ENCODE measurements at regions of chr3 and their contacts with region 1.

Region 1: DNA sequence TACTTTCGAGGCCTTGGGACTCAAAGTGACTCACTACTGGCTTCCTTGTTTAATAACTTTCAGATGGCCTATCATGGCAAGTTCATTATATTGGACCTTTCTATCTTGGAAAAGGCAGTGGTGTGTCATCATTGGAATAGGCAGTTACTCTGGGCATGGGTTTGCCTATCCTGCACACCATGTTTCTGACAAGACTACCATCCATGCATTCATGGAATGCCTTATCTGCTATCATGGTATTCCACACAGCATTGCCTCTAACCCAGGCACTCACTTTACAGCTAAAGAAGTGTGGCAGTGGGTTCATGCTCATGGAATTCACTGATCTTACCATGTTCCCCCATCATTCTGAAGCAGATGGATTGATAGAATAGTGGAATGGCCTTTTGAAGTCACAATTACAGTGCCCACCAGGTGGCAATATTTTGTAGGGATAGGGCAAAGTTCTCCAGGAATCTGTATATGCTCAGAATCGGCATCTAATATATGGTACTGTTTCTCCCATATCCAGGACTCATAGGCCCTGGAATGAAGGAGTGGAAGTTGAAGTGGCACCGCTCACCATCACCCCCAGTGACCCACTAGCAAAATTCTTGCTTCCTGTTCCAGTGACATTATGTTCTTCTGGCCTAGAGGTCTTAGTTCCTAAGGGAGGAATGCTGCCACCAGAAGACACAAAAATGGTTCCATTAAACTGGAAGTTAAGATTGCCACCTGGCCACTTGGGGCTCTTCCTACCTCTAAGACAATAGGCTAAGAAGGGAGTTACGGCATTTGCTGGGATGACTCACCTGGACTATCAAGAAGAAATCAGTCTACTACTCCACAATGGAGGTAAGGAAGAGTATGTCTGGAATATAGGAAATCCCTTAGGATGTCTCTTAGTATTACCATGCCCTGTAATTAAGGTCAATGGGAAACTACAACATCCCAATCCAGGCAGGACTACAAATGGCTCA is 1161.4 kb downstream of the SI start:
- DNase-seq: peak; percentile 12 to 37 (median 14)
- ATAC-seq: no peak
- H3K4me3 ChIP-seq: no peak overlapping the region
- H3K27ac ChIP-seq: no peak overlapping the region
- H3K4me1 ChIP-seq: no peaks in the 10 kb centered on the region
- H3K27me3 ChIP-seq: no peaks in the 10 kb centered on the region
- CTCF ChIP-seq: peak in 6 of 7 experiments; percentile 7 to 59 (median 46)
- POLR2A ChIP-seq: no peak

Region 2: DNA sequence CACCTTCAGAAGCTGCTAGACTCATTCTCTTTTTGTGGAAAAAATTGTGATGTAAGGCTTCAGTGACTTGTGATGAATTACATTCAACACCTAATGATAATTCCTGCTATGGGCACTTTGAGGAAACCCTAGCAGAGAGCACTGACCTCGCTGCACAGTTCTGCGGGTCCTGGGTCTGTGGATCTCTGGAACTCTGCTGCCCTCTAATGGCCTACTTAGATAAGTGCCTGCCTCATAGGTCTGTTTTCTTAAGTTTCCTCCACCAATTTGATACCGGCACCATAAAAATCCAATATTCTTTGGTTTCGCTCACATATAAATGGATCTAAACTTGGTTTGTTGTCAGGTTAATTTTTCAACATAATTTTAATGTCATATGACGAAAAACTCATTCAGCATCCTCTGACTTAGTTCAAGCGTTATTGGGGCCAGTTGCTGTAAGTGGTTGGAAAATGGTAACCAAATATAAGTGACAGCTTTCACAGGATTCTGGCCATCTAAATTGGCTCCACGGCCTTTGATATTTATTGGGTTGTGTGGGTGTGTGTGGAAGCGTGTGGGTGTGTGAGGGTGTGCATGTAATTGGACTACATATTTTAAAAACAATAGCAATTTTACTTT is 1268.9 kb after region 1 on chr3:
- intact Hi-C with region 1: loop called (anchors 10 kb)
- DNase-seq: peak; percentile 61 to 73 (median 66)
- ATAC-seq: peak; percentile 89
- H3K4me3 ChIP-seq: no peak overlapping the region
- H3K27ac ChIP-seq: no peak overlapping the region
- H3K4me1 ChIP-seq: peaks cover 4% of the 10 kb centered on the region
- H3K27me3 ChIP-seq: no peaks in the 10 kb centered on the region
- CTCF ChIP-seq: peak; percentile 57 to 87 (median 82)
- POLR2A ChIP-seq: no peak